ENCODE measurements at regions of chr9 and their contacts with region 1.

Region 1: GRCh38 chr9:124202447-124202971 is 55.2 kb upstream of the NEK6 start:
- DNase-seq: peak; percentile 85
- H3K4me3 Mint-ChIP-seq: peak overlapping the region; percentile 82
- H3K27ac Mint-ChIP-seq: peak overlapping the region; percentile 93
- H3K4me1 Mint-ChIP-seq: peaks cover 78% of the 10 kb centered on the region
- H3K27me3 Mint-ChIP-seq: no peaks in the 10 kb centered on the region

Region 2: GRCh38 chr9:123929870-123930831 is 272.4 kb before region 1 on chr9 and contains the start of gene DENND1A:
- intact Hi-C with region 1: loop called (anchors 5 kb)
- DNase-seq: peak; percentile 85
- H3K4me3 Mint-ChIP-seq: peak within 1 kb of the TSS; percentile 86
- H3K27ac Mint-ChIP-seq: peak within 1 kb of the TSS; percentile 83
- H3K4me1 Mint-ChIP-seq: peaks cover 27% of the 10 kb centered on the region
- H3K27me3 Mint-ChIP-seq: peaks cover 5% of the 10 kb centered on the region
- total RNA-seq, gene DENND1A: 15.1 and 20.0 TPM in 2 replicates

Region 3: DNA sequence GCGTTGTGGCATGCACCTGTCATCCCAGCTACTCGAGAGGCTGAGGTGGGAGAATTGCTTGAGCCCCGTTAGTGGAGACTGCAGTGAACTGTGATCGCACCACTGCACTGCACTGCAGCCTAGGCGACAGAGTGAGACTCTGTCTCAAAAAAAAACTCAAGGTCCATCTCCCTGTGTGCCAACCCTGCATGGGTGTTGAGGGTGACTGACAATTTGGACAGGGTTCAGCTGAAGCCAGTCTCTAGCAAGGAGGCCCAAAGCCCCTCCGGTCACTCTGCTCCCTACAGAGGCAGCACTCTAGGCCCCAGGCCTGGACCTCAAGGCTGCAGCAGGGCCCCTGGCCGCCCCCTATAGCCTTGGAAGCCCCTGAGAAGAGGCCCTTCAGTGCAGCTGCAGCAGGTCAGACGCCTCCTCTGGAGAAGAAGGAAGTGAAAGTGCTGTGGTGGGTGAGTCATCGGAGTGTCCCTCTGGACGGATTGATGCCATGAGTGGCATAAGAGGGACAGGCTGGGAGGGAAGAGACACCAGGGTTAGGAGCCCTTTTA is 16.0 kb after region 1 on chr9:
- intact Hi-C with region 1: loop called (anchors 1 kb)
- DNase-seq: peak; percentile 33
- H3K4me3 Mint-ChIP-seq: no peak overlapping the region
- H3K27ac Mint-ChIP-seq: peak overlapping the region; percentile 78
- H3K4me1 Mint-ChIP-seq: peaks cover 63% of the 10 kb centered on the region
- H3K27me3 Mint-ChIP-seq: no peaks in the 10 kb centered on the region

Region 4: GRCh38 chr9:124254261-124254682 is 51.8 kb after region 1 on chr9:
- intact Hi-C with region 1: loop called (anchors 1 kb)
- DNase-seq: peak; percentile 27
- H3K4me3 Mint-ChIP-seq: peak overlapping the region; percentile 43
- H3K27ac Mint-ChIP-seq: peak overlapping the region; percentile 55
- H3K4me1 Mint-ChIP-seq: peaks cover 60% of the 10 kb centered on the region
- H3K27me3 Mint-ChIP-seq: no peaks in the 10 kb centered on the region

Region 5: GRCh38 chr9:124415102-124415851 is 212.8 kb after region 1 on chr9 and contains the start of gene PSMB7:
- intact Hi-C with region 1: loop called (anchors 10 kb)
- DNase-seq: peak; percentile 95
- H3K4me3 Mint-ChIP-seq: peak within 1 kb of the TSS; percentile 98
- H3K27ac Mint-ChIP-seq: peak within 1 kb of the TSS; percentile 96
- H3K4me1 Mint-ChIP-seq: peaks cover 34% of the 10 kb centered on the region
- H3K27me3 Mint-ChIP-seq: no peaks in the 10 kb centered on the region
- total RNA-seq, gene PSMB7: 205 and 211 TPM in 2 replicates